PC-3 (cell line): ENCODE measurements at regions of chr12 and their contacts with region 1.

Region 1: DNA sequence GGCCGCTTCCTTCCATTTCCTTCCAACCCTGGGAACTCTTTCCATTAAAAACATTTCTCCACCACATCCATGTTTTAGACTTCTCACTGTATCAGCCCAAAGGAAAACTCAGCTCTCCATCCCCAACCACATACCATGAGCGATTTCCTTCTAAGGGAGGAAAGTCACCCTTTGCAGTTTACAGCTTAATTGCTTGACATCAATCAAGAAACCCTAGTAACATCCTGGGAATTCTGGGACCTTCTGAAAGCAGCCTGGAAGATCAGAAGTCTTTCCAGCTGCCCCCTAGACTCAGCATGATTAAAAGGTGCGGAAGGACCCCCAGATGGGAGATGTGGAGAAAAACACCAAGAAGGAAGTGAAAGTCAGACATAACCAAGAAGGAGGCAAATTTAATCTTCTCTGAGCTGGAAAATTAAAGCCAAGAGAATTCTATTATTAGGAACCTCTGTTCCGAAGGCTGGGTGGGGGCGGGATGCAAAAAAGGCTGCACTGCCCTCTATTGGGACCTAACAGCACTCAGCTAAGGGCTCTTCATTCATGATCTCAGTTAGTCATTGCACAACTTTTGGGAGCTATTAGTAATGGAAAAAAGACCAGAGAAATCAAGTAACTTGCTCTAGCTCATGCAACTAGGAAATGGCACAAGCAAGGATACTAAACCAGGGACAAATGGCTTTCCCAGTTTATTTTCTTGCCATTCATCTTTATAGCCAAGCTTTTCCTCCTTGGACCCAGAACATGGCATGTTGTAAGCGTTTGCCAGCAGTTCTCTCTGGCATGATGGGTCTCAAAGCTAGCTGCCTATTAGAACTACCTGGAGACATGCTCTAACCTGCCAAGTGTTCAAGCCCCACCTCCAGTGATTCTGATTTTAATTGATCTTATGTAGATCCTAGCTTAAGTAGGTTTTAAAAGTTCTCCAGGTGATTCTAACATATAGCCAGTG is 73.1 kb upstream of the PLXNC1 start:
- DNase-seq: peak; percentile 79
- ATAC-seq: peak; percentile 68
- H3K4me3 ChIP-seq: no peak overlapping the region
- H3K27ac ChIP-seq: no peak overlapping the region
- H3K4me1 ChIP-seq: no peaks in the 10 kb centered on the region
- H3K27me3 ChIP-seq: no peaks in the 10 kb centered on the region
- CTCF ChIP-seq: peak; percentile 76

Region 2: DNA sequence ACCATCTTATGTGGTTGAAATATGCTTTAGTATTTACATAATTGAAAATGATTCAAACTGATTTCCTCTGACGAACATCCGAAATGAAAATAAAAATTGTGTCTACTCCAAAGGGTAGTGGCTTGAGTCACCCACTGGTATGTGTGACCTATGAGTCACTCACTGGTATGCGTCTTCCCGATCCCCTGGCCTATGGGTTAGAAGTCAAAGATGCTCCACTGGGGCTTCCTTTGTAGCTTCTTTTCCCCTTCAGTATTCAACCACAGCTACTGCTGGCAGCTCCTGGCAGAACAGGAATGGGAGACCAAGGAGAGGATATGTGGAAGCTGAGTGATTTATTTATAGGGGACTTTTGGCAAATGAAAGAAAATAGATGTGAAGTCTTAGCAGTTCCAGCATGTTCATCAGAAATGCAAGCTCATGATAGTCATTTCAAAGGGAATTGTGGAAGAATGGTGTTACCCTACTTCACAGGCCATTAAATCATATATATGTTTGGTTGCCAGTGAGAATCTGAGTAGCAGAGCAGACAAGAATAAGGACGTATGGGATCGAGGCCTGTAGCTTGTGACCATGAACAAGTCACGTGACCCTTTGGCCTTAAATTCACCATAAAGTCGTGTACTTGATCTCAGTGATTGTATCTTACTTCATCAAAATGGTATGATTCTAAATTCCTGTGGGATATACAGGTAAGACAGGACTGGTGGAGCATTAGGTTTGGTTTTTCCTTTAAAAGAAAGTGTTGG is 289.8 kb before region 1 on chr12:
- CTCF ChIA-PET with region 1: interaction called, 18 read pairs
- POLR2A ChIA-PET with region 1: no interaction called
- intact Hi-C with region 1: no loop called
- DNase-seq: peak; percentile 98
- ATAC-seq: peak; percentile 93
- H3K4me3 ChIP-seq: peak overlapping the region; percentile 13; the same call in 1 of the 2 replicates
- H3K27ac ChIP-seq: peak overlapping the region; percentile 96
- H3K4me1 ChIP-seq: peaks cover 66% of the 10 kb centered on the region
- H3K27me3 ChIP-seq: no peaks in the 10 kb centered on the region
- CTCF ChIP-seq: no peak

Region 3: GRCh38 chr12:93918262-93918661 is 157.0 kb before region 1 on chr12:
- CTCF ChIA-PET with region 1: no interaction called
- POLR2A ChIA-PET with region 1: no interaction called
- intact Hi-C with region 1: no loop called
- DNase-seq: peak; percentile 15
- ATAC-seq: no peak
- H3K4me3 ChIP-seq: no peak overlapping the region
- H3K27ac ChIP-seq: no peak overlapping the region
- H3K4me1 ChIP-seq: peaks cover 7% of the 10 kb centered on the region
- H3K27me3 ChIP-seq: no peaks in the 10 kb centered on the region
- CTCF ChIP-seq: no peak

Region 4: DNA sequence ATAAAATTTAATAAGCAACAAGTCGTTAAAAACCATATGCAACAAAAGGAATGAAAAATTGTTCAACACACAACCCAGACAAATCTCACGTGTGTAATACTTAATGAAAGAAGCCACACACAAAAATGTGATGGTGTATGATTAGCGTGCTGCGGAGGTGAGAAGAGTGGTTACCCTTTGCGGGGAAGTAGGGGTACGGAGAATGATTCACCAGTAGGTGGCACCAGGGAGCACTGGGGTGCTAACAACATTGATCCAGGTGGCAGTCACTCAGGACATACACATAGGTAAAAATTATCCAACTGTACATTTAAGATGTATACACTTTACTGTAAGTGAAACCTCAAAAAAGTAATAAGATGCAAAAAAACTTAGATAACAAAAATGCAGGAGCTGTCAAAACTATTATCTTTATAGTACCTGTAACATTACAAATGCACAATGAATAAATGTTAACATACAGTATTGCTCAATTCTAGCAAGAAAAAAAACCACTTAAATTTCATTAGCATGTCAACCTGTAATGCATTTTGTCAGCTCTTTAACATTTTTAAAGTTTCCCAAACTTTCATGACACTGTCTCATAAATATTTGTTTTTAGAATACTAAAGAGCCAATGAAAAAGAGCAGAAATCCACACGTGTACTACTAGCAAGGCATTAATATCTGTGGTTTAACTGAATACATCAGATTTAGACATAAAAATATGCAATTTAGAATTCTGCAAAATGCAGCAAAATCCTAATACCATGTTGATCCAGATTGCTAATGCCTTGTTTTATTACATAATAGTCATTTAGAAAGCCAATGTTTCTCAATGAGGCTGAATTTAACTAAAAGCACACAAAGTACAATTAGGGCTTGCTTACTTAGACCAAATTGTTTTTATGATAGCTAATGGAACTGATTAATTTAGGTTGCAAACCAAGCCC is 528.4 kb after region 1 on chr12:
- CTCF ChIA-PET with region 1: no interaction called
- POLR2A ChIA-PET with region 1: no interaction called
- intact Hi-C with region 1: no loop called
- DNase-seq: peak; percentile 48
- ATAC-seq: no peak
- H3K4me3 ChIP-seq: no peak overlapping the region
- H3K27ac ChIP-seq: no peak overlapping the region
- H3K4me1 ChIP-seq: peaks cover 12% of the 10 kb centered on the region
- H3K27me3 ChIP-seq: no peaks in the 10 kb centered on the region
- CTCF ChIP-seq: peak; percentile 89